ENCODE measurements at regions of chr14 and their contacts with region 1.

Region 1: DNA sequence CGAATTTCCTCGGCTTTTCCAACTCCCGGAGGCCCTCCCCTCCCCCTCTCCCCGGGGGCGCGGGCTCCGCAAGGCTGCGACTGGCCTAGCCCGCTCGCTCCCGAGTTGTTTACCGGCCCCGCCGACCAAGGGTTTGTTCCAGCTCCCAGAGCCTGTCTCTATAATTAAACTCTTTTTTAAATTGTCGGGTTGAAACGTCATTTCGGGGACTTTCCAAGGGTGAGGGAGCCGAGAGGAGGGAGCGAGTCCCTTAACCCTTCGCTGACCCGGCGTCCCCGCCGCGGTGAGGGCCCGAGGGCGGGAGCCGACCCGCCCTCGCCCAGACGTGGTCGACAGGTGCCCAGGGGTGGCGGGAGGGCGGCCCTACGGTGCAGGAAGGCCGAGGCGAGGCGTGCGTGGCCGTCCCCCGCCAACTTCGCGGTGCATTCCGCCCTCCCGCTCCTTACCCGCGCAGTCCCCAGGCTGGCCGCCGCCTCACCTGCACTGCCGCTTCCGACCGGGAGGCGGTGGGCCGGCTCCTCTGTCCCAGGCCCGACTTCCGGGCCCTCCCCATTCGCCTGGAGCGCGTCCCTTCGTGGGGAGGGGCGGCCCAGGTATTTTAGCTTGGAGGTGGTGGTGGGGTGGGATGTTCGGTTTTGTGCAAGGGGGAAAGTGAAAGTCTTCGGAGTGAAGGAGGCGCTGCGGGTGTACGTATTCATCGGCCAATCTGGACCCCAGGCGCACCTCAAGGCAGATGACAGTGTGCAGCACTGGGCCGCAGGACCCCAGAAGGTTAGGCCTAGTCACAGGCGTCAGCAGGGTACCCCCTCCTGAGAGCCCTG is 2.9 kb upstream of the ZFP36L1 start:
- DNase-seq: peak; percentile 80 to 94
- ATAC-seq: peak; percentile 47 to 62 (median 49)
- H3K4me3 ChIP-seq: peak overlapping the region; percentile 96
- H3K4me3 Mint-ChIP-seq: peak overlapping the region; percentile 98
- H3K27ac ChIP-seq: peak overlapping the region; percentile 99
- H3K27ac Mint-ChIP-seq: peak overlapping the region; percentile 99
- H3K4me1 ChIP-seq: peaks cover 28% of the 10 kb centered on the region
- H3K4me1 Mint-ChIP-seq: peaks cover 41 to 43% of the 10 kb centered on the region in 2 donors
- H3K27me3 ChIP-seq: no peaks in the 10 kb centered on the region
- H3K27me3 Mint-ChIP-seq: no peaks in the 10 kb centered on the region
- CTCF ChIP-seq: peak; percentile 68

Region 2: GRCh38 chr14:68268197-68268596 is 527.6 kb before region 1 on chr14:
- intact Hi-C with region 1: loop called (anchors 1 kb)
- DNase-seq: peak in 1 of 2 donors; percentile 51
- ATAC-seq: peak; percentile 16 to 41 (median 25)
- H3K4me3 ChIP-seq: no peak overlapping the region
- H3K4me3 Mint-ChIP-seq: peak overlapping the region; percentile 80
- H3K27ac ChIP-seq: peak overlapping the region; percentile 76
- H3K27ac Mint-ChIP-seq: peak overlapping the region; percentile 92 to 93
- H3K4me1 ChIP-seq: peaks cover 26% of the 10 kb centered on the region
- H3K4me1 Mint-ChIP-seq: peaks cover 48 to 52% of the 10 kb centered on the region in 2 donors
- H3K27me3 ChIP-seq: no peaks in the 10 kb centered on the region
- H3K27me3 Mint-ChIP-seq: no peaks in the 10 kb centered on the region
- CTCF ChIP-seq: no peak

Region 3: DNA sequence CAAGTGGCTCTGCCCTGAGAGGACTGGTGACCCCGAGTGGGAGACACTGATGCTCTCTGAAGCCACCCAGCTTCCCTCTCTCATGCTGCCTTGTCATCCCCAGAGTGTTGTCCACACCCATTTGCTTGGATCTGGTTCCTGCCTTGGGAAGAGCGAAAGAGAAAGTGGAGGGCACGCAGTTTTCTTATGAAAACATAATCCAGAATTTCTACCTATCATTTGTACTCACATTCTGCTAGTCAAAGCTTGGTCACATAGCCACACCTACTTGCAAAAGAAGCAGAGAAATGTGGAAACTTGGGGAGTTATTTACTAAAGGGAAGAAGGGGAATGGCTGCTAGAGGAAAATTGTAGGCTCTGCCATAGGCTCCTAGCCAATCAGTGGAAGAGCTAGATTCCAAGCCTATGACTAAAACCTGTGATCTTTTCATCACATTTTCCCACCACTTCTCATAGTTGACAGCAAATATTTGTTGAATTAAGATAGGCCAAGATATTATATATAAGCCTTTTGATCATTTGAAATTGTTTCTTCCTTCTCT is 329.2 kb before region 1 on chr14:
- intact Hi-C with region 1: no loop called
- DNase-seq: no peak
- ATAC-seq: no peak
- H3K4me3 ChIP-seq: no peak overlapping the region
- H3K4me3 Mint-ChIP-seq: no peak overlapping the region
- H3K27ac ChIP-seq: no peak overlapping the region
- H3K27ac Mint-ChIP-seq: no peak overlapping the region
- H3K4me1 ChIP-seq: peaks cover 22% of the 10 kb centered on the region
- H3K4me1 Mint-ChIP-seq: peaks cover 19 to 21% of the 10 kb centered on the region in 2 donors
- H3K27me3 ChIP-seq: no peaks in the 10 kb centered on the region
- H3K27me3 Mint-ChIP-seq: no peaks in the 10 kb centered on the region
- CTCF ChIP-seq: no peak

Region 4: GRCh38 chr14:68495101-68496039 is 300.4 kb before region 1 on chr14:
- intact Hi-C with region 1: no loop called
- DNase-seq: peak in 1 of 2 donors; percentile 58
- ATAC-seq: no peak
- H3K4me3 ChIP-seq: no peak overlapping the region
- H3K4me3 Mint-ChIP-seq: no peak overlapping the region
- H3K27ac ChIP-seq: no peak overlapping the region
- H3K27ac Mint-ChIP-seq: no peak overlapping the region
- H3K4me1 ChIP-seq: peaks cover 9% of the 10 kb centered on the region
- H3K4me1 Mint-ChIP-seq: peaks cover 8 to 9% of the 10 kb centered on the region in 2 donors
- H3K27me3 ChIP-seq: no peaks in the 10 kb centered on the region
- H3K27me3 Mint-ChIP-seq: peaks cover 4 to 7% of the 10 kb centered on the region in 2 donors
- CTCF ChIP-seq: no peak

Region 5: DNA sequence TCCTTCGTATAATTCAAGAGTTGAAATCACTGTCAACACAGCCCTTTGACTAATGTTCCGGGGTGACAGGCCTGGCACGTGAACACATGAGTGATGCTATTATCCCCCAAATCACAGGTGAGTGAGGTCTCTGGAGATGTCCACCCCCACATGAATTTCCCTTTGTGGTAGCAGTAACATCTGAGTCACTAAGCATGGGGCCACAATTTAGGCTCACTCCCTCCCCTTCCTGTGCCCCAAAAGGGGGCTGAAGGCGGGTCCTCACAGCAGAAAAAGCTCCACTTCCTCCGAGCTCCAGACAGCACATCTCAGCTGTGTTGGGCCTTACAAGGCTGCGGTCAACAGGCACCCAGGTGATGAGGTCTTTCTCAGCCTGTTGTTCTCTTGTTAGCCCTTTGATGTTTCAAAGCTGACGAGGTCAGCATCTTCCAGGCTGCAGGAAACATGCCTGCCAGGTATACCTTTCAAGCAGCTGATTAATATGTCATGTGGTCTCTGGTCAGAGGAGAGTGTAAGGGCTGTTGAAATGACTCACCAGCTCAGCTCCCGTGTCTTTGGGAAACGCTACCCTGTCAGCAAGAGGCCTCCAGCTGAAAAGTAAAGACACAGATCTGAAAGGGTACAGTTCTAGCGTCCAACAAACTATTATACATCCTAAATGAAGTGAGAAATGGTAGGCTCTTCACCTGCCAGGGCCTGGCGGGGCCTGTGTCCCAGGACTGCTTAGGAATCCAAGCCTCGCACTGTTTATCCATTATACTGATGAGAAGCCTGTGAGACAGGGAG is 110.2 kb before region 1 on chr14:
- intact Hi-C with region 1: loop called (anchors 2 kb)
- DNase-seq: peak; percentile 66 to 91
- ATAC-seq: peak; percentile 86 to 88 (median 88)
- H3K4me3 ChIP-seq: no peak overlapping the region
- H3K4me3 Mint-ChIP-seq: peak overlapping the region; percentile 47
- H3K27ac ChIP-seq: peak overlapping the region; percentile 88
- H3K27ac Mint-ChIP-seq: peak overlapping the region; percentile 89 to 96
- H3K4me1 ChIP-seq: peaks cover 61% of the 10 kb centered on the region
- H3K4me1 Mint-ChIP-seq: peaks cover 32 to 45% of the 10 kb centered on the region in 2 donors
- H3K27me3 ChIP-seq: no peaks in the 10 kb centered on the region
- H3K27me3 Mint-ChIP-seq: no peaks in the 10 kb centered on the region
- CTCF ChIP-seq: no peak

Region 6: DNA sequence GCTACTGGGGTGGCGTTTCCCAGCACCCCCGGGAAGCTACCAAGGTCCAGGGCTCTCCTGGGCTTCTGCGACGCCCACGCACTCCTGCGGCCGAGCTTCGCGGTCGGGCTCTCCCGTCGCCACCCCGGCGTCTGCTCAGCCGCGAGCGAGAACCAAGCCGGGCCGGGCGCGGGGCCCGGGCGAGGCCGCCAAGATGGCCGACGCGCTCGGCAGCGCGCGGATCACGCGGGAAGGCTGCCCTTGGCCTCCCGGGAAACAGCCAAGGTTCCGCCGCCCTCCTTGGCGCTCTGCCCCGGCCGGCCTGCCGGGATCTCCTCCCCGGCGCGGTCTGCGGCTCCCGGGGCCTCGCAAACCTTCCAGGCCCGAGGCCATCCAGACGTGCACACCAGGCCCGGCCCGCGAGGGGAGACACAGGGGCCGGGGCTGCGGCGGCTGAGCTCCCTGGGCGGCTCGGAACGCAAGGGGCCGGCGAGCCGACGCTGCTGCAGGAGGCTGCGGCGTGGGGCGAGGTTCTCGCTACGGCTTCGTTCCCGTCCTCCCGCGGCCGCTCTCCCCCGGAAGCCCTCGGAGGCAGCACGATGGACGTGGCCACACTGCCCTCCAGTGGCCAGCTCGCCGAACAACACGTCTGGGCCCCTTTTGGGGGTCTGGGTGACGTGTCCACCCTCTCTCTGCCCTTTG is 20.6 kb after region 1 on chr14:
- intact Hi-C with region 1: loop called (anchors 1 kb)
- DNase-seq: peak; percentile 92 to 94
- ATAC-seq: peak; percentile 77 to 90 (median 80)
- H3K4me3 ChIP-seq: peak overlapping the region; percentile 32
- H3K4me3 Mint-ChIP-seq: peak overlapping the region; percentile 80
- H3K27ac ChIP-seq: peak overlapping the region; percentile 98
- H3K27ac Mint-ChIP-seq: peak overlapping the region; percentile 91 to 97
- H3K4me1 ChIP-seq: peaks cover 77% of the 10 kb centered on the region
- H3K4me1 Mint-ChIP-seq: peaks cover 63 to 69% of the 10 kb centered on the region in 2 donors
- H3K27me3 ChIP-seq: no peaks in the 10 kb centered on the region
- H3K27me3 Mint-ChIP-seq: no peaks in the 10 kb centered on the region
- CTCF ChIP-seq: peak; percentile 91

Region 7: DNA sequence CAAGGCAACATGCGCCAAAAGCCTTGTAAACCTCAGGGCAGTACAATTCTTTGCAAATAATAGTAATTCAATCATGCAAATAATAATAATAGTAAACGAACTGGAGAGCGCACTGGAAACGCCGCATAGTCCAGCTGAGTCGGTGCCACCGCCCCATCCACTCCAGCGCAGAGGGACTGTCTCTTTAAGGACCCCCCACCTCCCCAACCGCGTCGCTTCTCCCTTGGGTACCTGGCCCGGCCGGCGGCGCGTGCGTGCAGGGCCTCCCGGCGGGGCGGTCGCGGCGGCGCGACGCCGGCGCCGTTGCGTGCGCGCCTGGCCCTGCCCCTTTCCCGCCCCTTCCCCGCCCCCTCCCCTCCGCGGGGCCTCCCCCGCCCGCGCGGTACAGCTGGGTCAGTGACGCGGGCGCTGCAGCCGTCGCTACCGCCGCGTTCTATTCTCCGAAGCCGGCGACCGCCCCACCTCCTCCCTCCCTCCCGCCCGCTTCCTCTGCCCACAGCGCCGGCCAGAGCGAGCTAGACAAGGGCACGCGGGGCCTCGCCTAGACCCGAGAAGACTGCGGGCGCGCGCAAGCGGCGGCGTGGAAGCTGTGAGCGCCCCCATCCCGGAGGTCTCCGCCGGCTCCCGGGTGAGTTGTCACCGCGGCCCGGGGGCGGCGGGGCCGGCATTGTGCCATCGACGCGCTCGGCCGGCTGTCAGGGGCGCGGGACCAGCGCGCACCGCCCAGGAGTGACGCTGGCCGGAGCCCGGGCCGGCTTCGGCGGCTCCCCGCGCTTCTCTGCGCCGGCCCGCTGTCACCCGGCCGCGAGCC is 815.6 kb after region 1 on chr14 and contains the start of gene SUSD6:
- intact Hi-C with region 1: loop called (anchors 10 kb)
- DNase-seq: peak; percentile 78 to 95
- ATAC-seq: peak; percentile 79 to 92 (median 82)
- H3K4me3 ChIP-seq: peak within 1 kb of the TSS; percentile 88
- H3K4me3 Mint-ChIP-seq: peak within 1 kb of the TSS; percentile 89
- H3K27ac ChIP-seq: peak within 1 kb of the TSS; percentile 76
- H3K27ac Mint-ChIP-seq: peak within 1 kb of the TSS; percentile 95 to 96
- H3K4me1 ChIP-seq: peaks cover 48% of the 10 kb centered on the region
- H3K4me1 Mint-ChIP-seq: peaks cover 51 to 52% of the 10 kb centered on the region in 2 donors
- H3K27me3 ChIP-seq: no peaks in the 10 kb centered on the region
- H3K27me3 Mint-ChIP-seq: no peaks in the 10 kb centered on the region
- CTCF ChIP-seq: no peak
- total RNA-seq, gene SUSD6: 119 to 144 (median 140) TPM

Measured in natural killer cell (primary cell).